Left ventricle myocardium superior (tissue), 1 donor: ENCODE measurements at regions of chr13 and their contacts with region 1.

Region 1: GRCh38 chr13:49655906-49656305 is 27.6 kb downstream of the ARL11 start:
- DNase-seq: no peak
- ATAC-seq: no peak

Region 2: DNA sequence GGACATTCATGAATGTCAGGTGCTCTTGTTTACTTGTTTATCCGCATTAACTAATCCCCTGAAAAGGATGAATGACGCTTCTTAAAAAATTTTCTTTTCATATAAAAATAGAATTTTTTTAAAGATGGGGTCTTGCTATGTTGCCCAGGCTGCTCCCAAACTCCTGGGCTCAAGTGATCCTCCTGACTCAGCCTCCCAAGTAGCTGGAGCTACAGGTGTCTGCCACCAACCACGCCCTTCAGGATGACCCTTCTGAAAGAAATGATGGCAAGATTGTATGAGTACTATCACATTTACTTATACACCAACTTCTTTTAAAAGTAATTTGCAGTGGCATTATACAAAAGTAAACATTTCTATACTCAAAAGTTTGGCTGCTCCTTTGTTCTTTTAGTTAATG is 41.6 kb after region 1 on chr13:
- intact Hi-C with region 1: no loop called
- DNase-seq: no peak
- ATAC-seq: no peak

Region 3: DNA sequence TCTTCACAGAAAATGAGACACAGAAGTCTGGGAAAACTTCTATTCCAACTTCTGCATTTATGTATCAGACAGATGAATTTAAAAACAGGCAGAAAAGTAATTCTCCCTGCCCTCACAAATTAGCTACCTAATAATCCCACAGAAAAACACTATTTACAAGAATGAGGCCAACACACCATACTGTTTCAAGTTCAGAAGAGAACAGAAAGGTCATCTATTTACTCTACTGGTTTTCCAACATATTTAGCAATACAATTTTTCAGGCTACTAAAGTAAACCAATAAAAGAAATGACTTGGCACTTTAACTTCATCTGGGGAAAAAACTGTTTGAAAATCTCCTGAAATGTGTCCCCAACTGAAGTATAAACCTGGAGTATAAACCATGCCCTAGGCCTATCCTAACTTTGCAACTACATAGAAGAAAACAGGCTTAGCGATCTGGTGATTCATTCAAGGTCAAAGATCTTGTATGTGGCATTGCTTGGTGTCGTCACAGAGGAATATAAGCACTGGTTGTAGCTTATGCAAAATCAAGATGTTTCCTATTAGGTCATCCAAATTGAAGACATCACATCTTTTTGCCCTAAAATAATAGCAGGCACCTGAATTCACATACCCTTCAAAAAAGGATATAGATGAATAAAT is 55.4 kb after region 1 on chr13:
- intact Hi-C with region 1: loop called (anchors 2 kb)
- DNase-seq: no peak
- ATAC-seq: peak; percentile 37

Region 4: GRCh38 chr13:49893591-49893990 is 237.7 kb after region 1 on chr13:
- intact Hi-C with region 1: no loop called
- DNase-seq: no peak
- ATAC-seq: no peak